ENCODE measurements at regions of chr10 and their contacts with region 1.

Region 1: GRCh38 chr10:74008212-74008731 is 10.4 kb downstream of the VCL start:
- DNase-seq: no peak
- ATAC-seq: peak in 1 of 4 donors; percentile 29
- H3K4me3 ChIP-seq: no peak overlapping the region
- H3K27ac ChIP-seq: peak overlapping the region in 10 of 12 donors; percentile 9 to 83 (median 60)
- H3K4me1 ChIP-seq: peaks cover 19 to 86% (median 55%) of the 10 kb centered on the region in 12 donors
- H3K27me3 ChIP-seq: no peaks in the 10 kb centered on the region
- CTCF ChIP-seq: no peak
- POLR2A ChIP-seq: no peak

Region 2: DNA sequence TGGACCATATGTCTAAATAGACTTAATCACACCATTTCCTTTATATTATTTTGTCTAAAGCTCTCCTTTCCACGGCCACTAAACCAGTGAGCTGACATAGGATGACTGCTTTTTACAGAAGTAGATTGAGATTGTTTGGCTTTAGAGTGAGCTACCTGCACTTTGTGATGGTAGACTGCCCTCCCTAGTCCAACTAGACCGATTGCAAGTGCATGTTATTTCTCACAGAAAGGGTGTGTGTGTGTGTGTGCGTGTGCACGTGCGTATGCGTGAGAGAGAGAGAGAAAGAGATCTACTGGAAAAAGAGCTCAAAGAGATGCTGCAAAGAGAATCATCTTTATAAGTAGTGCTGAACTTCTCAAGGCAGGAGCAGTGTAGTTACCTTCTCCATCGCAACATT is 50.4 kb after region 1 on chr10:
- intact Hi-C with region 1: loop called in 3 of 10 experiments (anchors 10 kb)
- DNase-seq: no peak
- ATAC-seq: peak in 2 of 4 donors; percentile 28 to 58
- H3K4me3 ChIP-seq: no peak overlapping the region
- H3K27ac ChIP-seq: peak overlapping the region in 10 of 12 donors; percentile 15 to 86 (median 68)
- H3K4me1 ChIP-seq: peaks cover 3 to 72% (median 39%) of the 10 kb centered on the region in 12 donors
- H3K27me3 ChIP-seq: no peaks in the 10 kb centered on the region
- CTCF ChIP-seq: peak in 5 of 12 donors; percentile 13 to 41 (median 26)
- POLR2A ChIP-seq: no peak